Posterior cingulate gyrus (tissue), 11 donors: ENCODE measurements at regions of chr1 and their contacts with region 1.

Region 1: DNA sequence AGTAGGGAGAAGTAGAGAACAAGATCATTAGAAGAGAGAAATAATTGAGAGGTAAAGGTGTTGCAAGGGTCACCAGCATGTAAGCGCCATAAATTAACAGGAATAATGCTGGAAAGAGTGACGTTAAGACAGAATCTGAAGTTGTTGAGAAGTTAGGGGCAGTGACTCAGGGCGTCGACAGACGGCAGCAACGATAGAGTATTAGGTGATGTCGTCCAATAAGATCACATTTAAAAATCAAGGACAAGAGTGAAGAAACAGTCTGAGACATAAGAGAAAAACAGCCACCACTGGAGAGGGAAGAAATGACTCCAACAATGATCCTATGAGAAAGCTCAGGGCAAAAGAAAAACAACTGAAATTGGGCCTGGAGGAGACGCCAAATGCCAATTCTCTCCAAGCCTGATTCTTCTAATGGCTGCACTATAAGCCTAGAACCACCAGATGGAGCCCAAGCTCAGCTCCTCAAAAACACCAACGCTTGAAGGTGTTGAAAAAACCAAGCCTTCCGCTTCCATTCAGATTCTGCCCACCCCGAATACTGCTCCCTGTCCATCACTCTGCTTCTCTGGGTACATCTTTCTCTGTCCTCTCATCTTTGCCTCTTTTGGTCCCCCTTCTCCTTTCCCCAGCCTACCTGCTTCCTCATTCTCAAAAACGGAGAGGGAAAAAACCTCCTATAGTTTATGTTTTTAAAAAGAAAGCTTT is 70.0 kb downstream of the LUZP1 start:
- DNase-seq: peak in 7 of 10 donors; percentile 23 to 90 (median 57)

Region 2: GRCh38 chr1:22976461-22977243 is 122.0 kb before region 1 on chr1:
- intact Hi-C with region 1: loop called (anchors 10 kb)
- DNase-seq: peak; percentile 31 to 95 (median 69)

Region 3: GRCh38 chr1:23062271-23062670 is 36.3 kb before region 1 on chr1:
- intact Hi-C with region 1: no loop called
- DNase-seq: no peak

Region 4: DNA sequence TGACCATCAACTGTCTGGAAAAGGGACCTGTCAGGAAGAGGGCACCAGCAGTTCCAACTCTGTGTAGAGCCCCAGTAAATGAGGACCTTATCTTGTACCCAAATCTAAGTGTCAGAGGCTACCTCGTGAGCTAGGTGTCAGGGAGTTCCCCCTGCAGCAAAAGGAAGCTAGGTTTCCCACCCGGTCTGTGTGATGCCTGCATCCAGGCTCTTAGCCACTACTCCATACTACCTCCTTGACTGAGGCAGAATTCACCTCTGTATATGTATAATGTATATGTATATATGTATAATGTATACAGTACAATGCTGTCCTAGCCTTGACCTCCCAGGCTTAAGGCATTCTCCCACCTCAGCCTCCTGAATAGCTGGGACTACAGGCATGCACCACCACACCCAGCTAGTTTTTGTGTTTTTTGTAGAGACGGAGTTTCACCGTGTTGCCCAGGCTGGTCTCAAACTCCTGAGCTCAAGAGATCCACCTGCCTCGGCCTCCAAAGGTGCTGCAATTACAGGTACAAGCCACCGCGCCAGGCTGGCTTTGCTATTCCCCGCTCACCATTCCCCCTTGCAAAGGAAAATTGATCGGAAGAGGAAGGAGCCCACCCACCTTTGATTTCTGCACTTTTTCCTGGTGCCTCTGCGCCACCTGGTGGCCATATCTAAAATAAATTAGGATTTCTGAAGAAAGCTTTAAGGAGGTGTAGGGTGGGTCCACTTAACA is 85.8 kb after region 1 on chr1:
- intact Hi-C with region 1: loop called (anchors 1 kb)
- DNase-seq: peak in 1 of 10 donors; percentile 26

Region 5: DNA sequence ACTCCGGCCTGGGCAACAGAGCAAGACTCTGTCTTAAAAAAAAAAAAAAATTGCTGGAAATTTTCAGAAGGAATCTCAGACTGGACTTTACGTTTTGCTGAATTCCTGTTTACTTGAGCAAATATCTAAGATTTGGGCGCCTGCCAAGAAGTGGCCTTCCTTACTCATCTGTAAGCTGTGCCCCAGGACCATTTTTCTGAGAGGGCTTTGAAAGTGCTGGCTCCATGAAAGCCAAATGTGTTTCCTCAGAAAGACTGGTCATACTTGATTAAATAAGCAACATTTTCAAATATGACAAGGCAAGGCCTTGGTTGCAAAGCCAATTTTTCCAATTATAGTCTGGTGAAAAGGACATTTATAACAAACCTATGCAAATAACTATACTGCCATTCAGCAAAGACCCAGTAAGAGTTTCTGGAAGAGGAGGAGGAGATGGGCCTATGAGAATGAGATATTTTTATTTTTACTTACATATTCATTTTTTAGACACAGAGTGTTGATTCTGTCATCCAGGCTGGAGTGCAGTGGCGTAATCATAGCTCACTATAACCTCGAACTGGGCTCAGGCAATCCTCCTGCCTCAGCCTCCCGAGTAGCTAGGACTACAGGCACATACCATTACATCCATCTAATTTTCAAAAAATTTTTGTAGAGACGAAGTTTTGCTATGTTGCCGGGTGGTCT is 175.0 kb after region 1 on chr1:
- intact Hi-C with region 1: loop called (anchors 10 kb)
- DNase-seq: no peak

Region 6: DNA sequence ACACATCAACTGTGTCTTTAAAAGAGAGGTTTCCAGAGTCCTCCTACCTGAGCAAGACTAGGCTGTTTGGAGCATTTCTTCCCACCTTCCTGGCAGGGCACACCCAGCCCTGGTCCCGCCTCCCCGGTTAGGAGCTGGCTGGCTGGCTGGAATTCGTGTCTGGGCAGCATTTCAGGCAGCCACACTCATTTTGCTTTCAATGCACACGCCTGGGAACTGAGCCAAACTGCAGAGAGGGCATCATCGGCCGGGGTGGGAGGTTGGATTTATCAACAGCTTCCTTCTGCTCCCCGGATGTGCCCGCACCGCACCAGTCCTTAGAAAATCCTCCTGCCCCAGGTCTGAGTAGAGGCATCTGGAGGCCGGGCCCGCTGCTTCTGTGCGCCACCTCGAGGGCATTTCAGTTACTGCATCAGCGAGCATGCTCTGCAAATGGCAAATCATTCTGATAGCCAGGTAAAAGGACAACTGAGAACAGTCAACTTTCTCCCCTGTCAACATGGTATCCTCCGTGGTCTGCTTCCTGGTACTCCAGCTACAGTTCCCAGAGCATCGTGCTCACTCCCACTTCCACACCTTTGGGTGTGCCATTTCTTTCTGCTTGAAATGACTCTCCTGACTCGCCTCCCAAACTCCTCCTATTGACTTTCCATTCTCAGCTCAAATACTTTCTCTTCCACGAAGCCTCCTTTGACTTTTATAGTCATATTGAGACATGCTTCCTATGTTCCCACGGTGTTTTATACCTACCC is 305.3 kb after region 1 on chr1:
- intact Hi-C with region 1: loop called (anchors 10 kb)
- DNase-seq: peak; percentile 76 to 98 (median 92)